CD8-positive, alpha-beta T cell (primary cell): ENCODE measurements at regions of chr14 and their contacts with region 1.

Region 1: DNA sequence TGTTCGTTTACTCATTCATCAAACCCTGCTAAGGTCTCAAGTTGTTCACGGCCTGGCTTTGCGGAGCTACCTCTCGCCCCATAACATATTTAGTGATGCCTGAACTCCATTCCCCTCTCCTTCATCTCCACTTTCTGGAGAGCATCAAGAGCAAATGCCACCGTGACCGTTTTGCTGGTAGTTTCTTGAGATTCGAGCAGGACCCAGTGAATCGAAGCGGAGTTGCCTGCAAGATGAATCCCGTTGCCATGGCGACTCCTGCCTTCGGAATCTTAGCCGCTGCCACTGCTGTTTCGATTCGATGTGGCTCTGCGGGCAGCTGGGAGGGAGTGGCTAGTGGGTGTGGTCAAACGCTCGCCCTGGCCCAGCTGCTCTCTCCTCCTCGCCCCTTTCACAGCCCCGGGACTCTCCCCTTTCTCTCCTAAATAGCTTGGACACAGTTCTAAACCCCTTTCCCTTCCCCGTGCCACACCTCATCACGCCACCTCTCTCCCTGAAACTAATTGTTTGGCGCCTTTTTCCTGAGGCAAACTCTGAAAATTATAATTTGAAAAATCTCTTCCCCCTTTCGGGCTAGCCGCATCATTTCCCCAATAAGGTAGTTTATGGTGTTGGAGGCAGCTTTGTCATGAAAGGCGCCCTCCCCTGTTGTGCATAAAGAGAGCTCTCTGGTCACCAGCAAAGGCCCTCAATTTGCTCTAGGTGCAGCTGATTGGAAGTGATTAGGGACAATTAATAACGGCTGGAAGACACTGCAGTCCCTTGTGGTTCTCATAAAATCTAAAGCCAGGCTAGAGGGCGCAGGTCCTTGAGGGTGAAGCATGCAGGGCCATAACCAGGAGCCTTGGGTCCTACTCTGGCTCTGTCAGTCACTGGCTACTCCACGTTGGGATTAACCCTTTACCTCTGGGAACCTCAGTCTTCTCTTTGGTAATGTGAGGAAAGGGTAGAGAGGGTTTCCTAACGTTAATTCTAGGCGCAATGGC is 1.6 kb downstream of the DAAM1 start:
- DNase-seq: peak; percentile 37 to 87 (median 66)
- ATAC-seq: no peak
- H3K4me3 ChIP-seq: peak overlapping the region; percentile 63 to 94
- H3K4me3 Mint-ChIP-seq: peak overlapping the region; percentile 98
- H3K27ac ChIP-seq: peak overlapping the region; percentile 76 to 87
- H3K27ac Mint-ChIP-seq: peak overlapping the region; percentile 98
- H3K4me1 ChIP-seq: peaks cover 14% of the 10 kb centered on the region
- H3K4me1 Mint-ChIP-seq: peaks cover 17% of the 10 kb centered on the region
- H3K27me3 ChIP-seq: no peaks in the 10 kb centered on the region
- H3K27me3 Mint-ChIP-seq: no peaks in the 10 kb centered on the region
- CTCF ChIP-seq: no peak

Region 2: DNA sequence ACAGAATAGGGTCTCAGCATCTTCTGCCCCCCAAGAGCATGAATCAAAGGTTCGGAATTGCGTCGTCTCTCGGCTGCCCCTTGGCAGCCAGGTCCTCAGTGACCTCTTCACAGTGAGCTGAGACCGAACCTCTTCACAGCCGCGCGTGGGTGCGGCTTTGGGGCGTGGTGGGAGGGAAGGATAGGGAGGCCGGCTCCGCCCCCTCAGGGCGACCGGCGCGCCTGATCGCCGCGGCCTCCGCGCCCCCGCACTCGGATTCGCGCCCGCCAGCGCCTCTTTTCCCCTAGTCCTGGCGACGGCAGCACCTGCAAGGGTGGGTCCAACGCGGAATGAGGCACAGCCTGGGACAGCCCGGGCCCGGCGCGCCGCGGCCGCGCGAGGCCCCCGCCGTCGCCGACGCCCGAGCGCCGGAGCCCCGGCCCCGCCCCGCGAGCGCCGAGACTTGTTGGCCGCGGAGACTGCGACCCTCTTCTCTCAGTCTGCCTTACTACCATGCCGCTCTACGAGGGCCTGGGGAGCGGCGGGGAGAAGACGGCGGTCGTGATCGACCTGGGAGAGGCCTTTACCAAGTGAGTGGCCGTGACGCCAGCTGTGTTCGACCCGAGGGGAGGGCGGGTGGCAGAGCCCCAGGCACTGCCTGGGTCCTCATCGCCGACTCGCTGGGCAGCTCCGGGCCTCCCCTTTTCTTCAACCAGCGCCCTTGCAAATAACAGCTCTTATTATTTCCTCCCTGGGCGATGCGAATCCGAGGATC is 990.2 kb before region 1 on chr14 and contains the start of gene ACTR10:
- CTCF ChIA-PET with region 1: no interaction called
- POLR2A ChIA-PET with region 1: no interaction called
- intact Hi-C with region 1: loop called (anchors 5 to 10 kb)
- DNase-seq: peak; percentile 76 to 95 (median 85)
- ATAC-seq: peak; percentile 87
- H3K4me3 ChIP-seq: peak within 1 kb of the TSS; percentile 75 to 92
- H3K4me3 Mint-ChIP-seq: peak within 1 kb of the TSS; percentile 94
- H3K27ac ChIP-seq: peak within 1 kb of the TSS; percentile 86 to 87
- H3K27ac Mint-ChIP-seq: peak within 1 kb of the TSS; percentile 98
- H3K4me1 ChIP-seq: peaks cover 25% of the 10 kb centered on the region
- H3K4me1 Mint-ChIP-seq: peaks cover 46% of the 10 kb centered on the region
- H3K27me3 ChIP-seq: no peaks in the 10 kb centered on the region
- H3K27me3 Mint-ChIP-seq: no peaks in the 10 kb centered on the region
- CTCF ChIP-seq: no peak
- total RNA-seq, gene ACTR10: 47.5 to 47.7 TPM

Region 3: GRCh38 chr14:59126710-59127432 is 63.2 kb before region 1 on chr14:
- CTCF ChIA-PET with region 1: interaction called, 3 read pairs
- POLR2A ChIA-PET with region 1: no interaction called
- intact Hi-C with region 1: loop called in 1 of 2 experiments (anchors 2 kb)
- DNase-seq: peak in 4 of 9 experiments; percentile 13 to 75 (median 42)
- ATAC-seq: peak; percentile 74
- H3K4me3 ChIP-seq: no peak overlapping the region
- H3K4me3 Mint-ChIP-seq: no peak overlapping the region
- H3K27ac ChIP-seq: no peak overlapping the region
- H3K27ac Mint-ChIP-seq: no peak overlapping the region
- H3K4me1 ChIP-seq: no peaks in the 10 kb centered on the region
- H3K4me1 Mint-ChIP-seq: no peaks in the 10 kb centered on the region
- H3K27me3 ChIP-seq: no peaks in the 10 kb centered on the region
- H3K27me3 Mint-ChIP-seq: peaks cover 27% of the 10 kb centered on the region
- CTCF ChIP-seq: peak; percentile 93

Region 4: DNA sequence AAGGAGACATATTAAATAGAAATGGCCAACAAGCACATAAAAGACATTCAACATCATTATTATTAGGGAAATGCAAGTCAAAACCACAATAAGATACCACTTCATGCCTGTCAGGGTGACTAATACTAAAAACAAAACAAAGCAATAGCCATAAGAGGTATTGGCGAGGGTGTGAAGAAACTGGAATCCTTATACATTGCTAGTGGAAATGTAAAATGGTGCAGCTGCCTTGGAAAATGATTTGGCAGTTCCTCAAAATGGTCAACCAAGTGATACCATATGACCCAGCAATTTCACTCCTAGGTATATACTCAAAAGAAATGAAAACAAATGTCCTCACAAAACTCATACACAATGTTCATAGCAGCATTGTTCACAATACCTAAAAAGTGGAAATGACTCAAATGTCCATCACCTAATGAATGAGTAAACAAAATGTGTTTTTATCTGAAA is 248.1 kb after region 1 on chr14:
- CTCF ChIA-PET with region 1: no interaction called
- POLR2A ChIA-PET with region 1: no interaction called
- intact Hi-C with region 1: no loop called
- DNase-seq: no peak
- ATAC-seq: no peak
- H3K4me3 ChIP-seq: no peak overlapping the region
- H3K4me3 Mint-ChIP-seq: no peak overlapping the region
- H3K27ac ChIP-seq: no peak overlapping the region
- H3K27ac Mint-ChIP-seq: no peak overlapping the region
- H3K4me1 ChIP-seq: no peaks in the 10 kb centered on the region
- H3K4me1 Mint-ChIP-seq: no peaks in the 10 kb centered on the region
- H3K27me3 ChIP-seq: no peaks in the 10 kb centered on the region
- H3K27me3 Mint-ChIP-seq: no peaks in the 10 kb centered on the region
- CTCF ChIP-seq: no peak

Region 5: GRCh38 chr14:60164712-60165546 is 974.9 kb after region 1 on chr14 and contains the start of gene DHRS7:
- CTCF ChIA-PET with region 1: no interaction called
- POLR2A ChIA-PET with region 1: no interaction called
- intact Hi-C with region 1: loop called (anchors 5 to 10 kb)
- DNase-seq: peak; percentile 28 to 89 (median 62)
- ATAC-seq: peak; percentile 70
- H3K4me3 ChIP-seq: peak within 1 kb of the TSS; percentile 68 to 88
- H3K4me3 Mint-ChIP-seq: peak within 1 kb of the TSS; percentile 99
- H3K27ac ChIP-seq: peak within 1 kb of the TSS; percentile 82 to 95
- H3K27ac Mint-ChIP-seq: peak within 1 kb of the TSS; percentile 100
- H3K4me1 ChIP-seq: peaks cover 31% of the 10 kb centered on the region
- H3K4me1 Mint-ChIP-seq: peaks cover 52% of the 10 kb centered on the region
- H3K27me3 ChIP-seq: no peaks in the 10 kb centered on the region
- H3K27me3 Mint-ChIP-seq: no peaks in the 10 kb centered on the region
- CTCF ChIP-seq: no peak
- total RNA-seq, gene DHRS7: 26.6 to 27.6 TPM

Region 6: GRCh38 chr14:60734465-60735242 is 1544.6 kb after region 1 on chr14 and contains the start of gene MNAT1:
- CTCF ChIA-PET with region 1: no interaction called
- POLR2A ChIA-PET with region 1: no interaction called
- intact Hi-C with region 1: loop called in 1 of 2 experiments (anchors 10 kb)
- DNase-seq: peak; percentile 62 to 88 (median 78)
- ATAC-seq: peak; percentile 98
- H3K4me3 ChIP-seq: peak within 1 kb of the TSS; percentile 83 to 84
- H3K4me3 Mint-ChIP-seq: peak within 1 kb of the TSS; percentile 100
- H3K27ac ChIP-seq: peak within 1 kb of the TSS; percentile 40 to 56
- H3K27ac Mint-ChIP-seq: peak within 1 kb of the TSS; percentile 95
- H3K4me1 ChIP-seq: peaks cover 19% of the 10 kb centered on the region
- H3K4me1 Mint-ChIP-seq: peaks cover 36% of the 10 kb centered on the region
- H3K27me3 ChIP-seq: no peaks in the 10 kb centered on the region
- H3K27me3 Mint-ChIP-seq: peaks cover 12% of the 10 kb centered on the region
- CTCF ChIP-seq: no peak
- total RNA-seq, gene MNAT1: 12.0 to 14.5 TPM